ENCODE measurements at regions of chr5 and their contacts with region 1.

Region 1: GRCh38 chr5:72920690-72921502 is 34.9 kb upstream of the FCHO2 start:
- DNase-seq: no peak
- ATAC-seq: peak in 2 of 8 donors; percentile 46 to 49
- H3K4me3 ChIP-seq: no peak overlapping the region
- H3K27ac ChIP-seq: no peak overlapping the region
- H3K4me1 ChIP-seq: peaks cover 0 to 4% (median 0%) of the 10 kb centered on the region in 9 donors
- H3K27me3 ChIP-seq: no peaks in the 10 kb centered on the region
- CTCF ChIP-seq: peak in 8 of 9 donors; percentile 11 to 56 (median 38)

Region 2: DNA sequence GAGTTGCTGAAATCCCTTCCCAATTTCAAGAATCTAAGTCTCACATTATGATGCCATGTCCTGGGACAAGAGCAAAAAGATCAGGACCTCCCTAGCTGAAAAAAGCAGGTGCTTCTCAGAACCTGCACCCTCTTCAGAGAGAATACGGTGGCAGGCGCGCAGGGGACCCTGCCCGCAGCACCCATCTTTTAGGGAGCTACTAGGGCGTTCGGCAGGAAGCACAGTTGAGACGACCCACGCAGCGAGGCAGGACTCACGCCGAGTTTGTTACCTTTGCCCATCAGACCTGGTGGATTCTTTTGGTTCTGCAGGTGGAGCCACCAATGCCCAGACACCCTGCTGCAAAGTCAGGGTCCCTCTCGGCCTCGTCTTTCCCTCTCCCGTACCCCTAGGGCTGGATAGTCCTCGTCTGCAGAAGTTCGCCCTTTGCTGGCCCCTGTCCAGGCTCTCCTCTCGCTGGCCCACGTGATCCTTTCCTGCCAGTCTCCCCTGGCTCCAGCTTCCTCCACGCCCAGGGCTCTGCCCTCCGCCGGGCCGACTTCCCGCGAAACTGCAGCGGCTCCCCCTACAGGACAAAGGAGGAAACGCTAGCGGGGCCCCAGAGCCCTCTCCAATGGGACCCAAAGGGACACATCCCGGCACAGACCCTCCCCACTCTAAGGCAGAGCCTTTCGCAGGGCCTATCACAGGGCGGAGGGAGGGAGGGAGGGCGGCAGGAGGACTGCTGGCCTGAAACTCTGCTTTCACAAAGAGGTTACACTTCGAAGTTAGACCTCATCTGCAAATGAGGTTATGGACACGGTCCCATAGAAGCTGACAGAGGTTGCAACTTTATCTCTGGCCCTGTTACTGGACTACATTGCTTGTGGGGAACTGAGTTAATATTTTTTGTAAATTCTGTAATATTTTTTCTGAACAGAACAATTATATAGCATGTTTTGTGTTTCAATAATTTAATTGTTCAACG is 280.9 kb after region 1 on chr5:
- intact Hi-C with region 1: loop called in 1 of 10 experiments (anchors 10 kb)
- DNase-seq: peak; percentile 39 to 65
- ATAC-seq: peak; percentile 61 to 88 (median 76)
- H3K4me3 ChIP-seq: peak overlapping the region in 1 of 10 donors; percentile 8
- H3K27ac ChIP-seq: no peak overlapping the region
- H3K4me1 ChIP-seq: peaks cover 0 to 9% (median 4%) of the 10 kb centered on the region in 9 donors
- H3K27me3 ChIP-seq: peaks cover 0 to 68% (median 46%) of the 10 kb centered on the region in 7 donors
- CTCF ChIP-seq: peak; percentile 32 to 77 (median 70)

Measured in heart right ventricle (tissue), 16 donors.